GM12878 (cell line): ENCODE measurements at regions of chr13 and their contacts with region 1.

Region 1: GRCh38 chr13:108155185-108156106 is 59.9 kb downstream of the LIG4 start:
- DNase-seq: no peak
- ATAC-seq: peak; percentile 54
- H3K4me3 ChIP-seq: no peak overlapping the region
- H3K27ac ChIP-seq: no peak overlapping the region
- H3K4me1 ChIP-seq: no peaks in the 10 kb centered on the region
- H3K27me3 ChIP-seq: no peaks in the 10 kb centered on the region
- CTCF ChIP-seq: peak; percentile 71 to 76 (median 73)
- EP300 ChIP-seq: no peak
- POLR2A ChIP-seq: no peak
- RAD21 ChIP-seq: peak; percentile 71

Region 2: DNA sequence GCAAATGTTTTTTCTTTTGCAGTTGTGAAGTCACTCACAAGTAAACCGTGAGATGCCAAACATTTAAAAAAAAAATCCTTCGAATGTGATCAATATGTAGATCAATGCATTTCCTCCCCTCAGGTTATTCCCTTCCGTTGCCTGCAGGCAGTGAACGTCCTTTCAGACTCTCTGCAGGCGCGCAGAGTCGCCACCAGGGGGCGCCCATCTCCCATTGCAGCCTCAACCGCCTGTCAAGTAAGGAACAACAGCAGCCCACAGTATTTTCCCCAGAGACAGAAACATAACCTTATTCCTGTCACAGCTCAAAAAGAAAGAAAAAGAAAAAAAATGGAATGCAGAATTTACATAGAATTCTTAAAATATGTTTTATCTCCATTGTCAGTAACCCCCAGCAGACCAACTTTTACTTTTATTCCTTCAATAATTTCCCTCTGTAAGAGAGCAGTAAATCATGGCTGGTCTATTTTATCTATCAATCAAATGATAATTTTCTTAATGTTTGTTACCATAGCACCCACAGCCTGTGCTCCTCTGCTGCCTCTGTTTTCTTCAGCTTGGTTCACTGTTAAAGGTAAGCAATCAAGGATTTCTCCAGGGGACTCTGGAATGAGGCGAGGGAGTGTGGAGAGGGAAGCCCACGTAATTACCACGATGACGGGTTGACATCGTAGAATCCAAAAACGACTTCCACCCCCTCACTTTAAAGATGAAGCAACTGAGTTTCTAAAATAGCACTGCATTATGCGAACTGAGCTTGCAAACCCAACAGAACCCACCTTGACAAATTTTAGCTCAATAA is 949.9 kb before region 1 on chr13:
- CTCF ChIA-PET with region 1: interaction called, 6 read pairs
- POLR2A ChIA-PET with region 1: no interaction called
- RAD21 ChIA-PET with region 1: interaction called, 4 read pairs
- SMC1A ChIA-PET with region 1: no interaction called
- in situ Hi-C with region 1: loop called (anchors 5 kb)
- intact Hi-C with region 1: loop called (anchors 1 kb)
- DNase-seq: no peak
- ATAC-seq: peak; percentile 99
- H3K4me3 ChIP-seq: no peak overlapping the region
- H3K27ac ChIP-seq: no peak overlapping the region
- H3K4me1 ChIP-seq: no peaks in the 10 kb centered on the region
- H3K27me3 ChIP-seq: no peaks in the 10 kb centered on the region
- CTCF ChIP-seq: peak; percentile 87 to 97 (median 95); a peak in 5 of 6 replicates
- EP300 ChIP-seq: no peak
- POLR2A ChIP-seq: no peak
- RAD21 ChIP-seq: peak; percentile 60

Region 3: DNA sequence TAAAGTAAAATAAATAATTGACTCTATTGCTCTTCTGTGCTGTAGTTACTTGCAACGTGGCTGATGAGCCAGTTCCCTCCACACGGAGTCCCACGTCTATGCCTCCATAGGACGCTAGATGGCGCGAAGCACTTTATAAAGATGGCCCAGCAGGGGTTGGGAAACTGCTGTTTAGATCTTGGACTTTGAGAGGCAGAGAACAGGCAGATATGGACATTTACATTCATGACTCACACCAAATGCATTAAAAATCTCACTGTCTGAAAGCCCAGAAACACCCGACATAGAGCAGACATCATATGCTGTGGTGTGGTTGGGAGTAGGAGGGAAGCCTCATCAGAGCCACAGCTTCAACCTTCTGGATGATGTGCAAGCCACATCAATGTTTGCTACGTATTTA is 944.4 kb before region 1 on chr13:
- CTCF ChIA-PET with region 1: interaction called, 13 read pairs
- POLR2A ChIA-PET with region 1: no interaction called
- RAD21 ChIA-PET with region 1: interaction called, 4 read pairs
- SMC1A ChIA-PET with region 1: interaction called, 4 read pairs
- in situ Hi-C with region 1: loop called (anchors 5 kb)
- intact Hi-C with region 1: loop called (anchors 1 kb)
- DNase-seq: no peak
- ATAC-seq: peak; percentile 99
- H3K4me3 ChIP-seq: no peak overlapping the region
- H3K27ac ChIP-seq: no peak overlapping the region
- H3K4me1 ChIP-seq: no peaks in the 10 kb centered on the region
- H3K27me3 ChIP-seq: no peaks in the 10 kb centered on the region
- CTCF ChIP-seq: peak; percentile 82 to 92 (median 88)
- EP300 ChIP-seq: no peak
- POLR2A ChIP-seq: no peak
- RAD21 ChIP-seq: peak; percentile 88

Region 4: GRCh38 chr13:108137176-108137575 is 18.3 kb before region 1 on chr13:
- CTCF ChIA-PET with region 1: interaction called, 18 read pairs
- POLR2A ChIA-PET with region 1: no interaction called
- RAD21 ChIA-PET with region 1: no interaction called
- SMC1A ChIA-PET with region 1: interaction called, 4 read pairs
- in situ Hi-C with region 1: no loop called
- intact Hi-C with region 1: no loop called
- DNase-seq: no peak
- ATAC-seq: no peak
- H3K4me3 ChIP-seq: no peak overlapping the region
- H3K27ac ChIP-seq: no peak overlapping the region
- H3K4me1 ChIP-seq: no peaks in the 10 kb centered on the region
- H3K27me3 ChIP-seq: no peaks in the 10 kb centered on the region
- CTCF ChIP-seq: no peak
- EP300 ChIP-seq: no peak
- POLR2A ChIP-seq: no peak
- RAD21 ChIP-seq: no peak

Region 5: DNA sequence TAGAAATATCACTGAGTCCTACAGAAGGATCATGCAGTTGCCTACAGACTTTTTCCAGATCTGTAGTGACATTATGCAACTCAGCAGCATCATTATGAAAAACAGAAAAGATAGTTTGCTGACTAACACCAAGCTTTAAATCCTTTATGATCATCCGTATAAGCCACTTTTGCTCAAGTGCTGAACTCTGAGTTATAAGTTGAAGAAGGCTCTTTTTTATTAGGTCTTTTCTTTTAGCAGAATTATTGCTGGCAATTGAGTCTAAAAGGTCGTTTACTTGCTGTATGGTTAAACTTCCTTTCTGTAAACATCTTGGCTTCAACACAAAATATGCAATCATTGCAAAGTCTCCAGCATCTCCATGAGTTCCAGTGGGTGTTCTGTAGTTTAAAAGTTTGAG is 55.1 kb after region 1 on chr13:
- CTCF ChIA-PET with region 1: no interaction called
- POLR2A ChIA-PET with region 1: no interaction called
- RAD21 ChIA-PET with region 1: no interaction called
- SMC1A ChIA-PET with region 1: no interaction called
- in situ Hi-C with region 1: no loop called
- intact Hi-C with region 1: no loop called
- DNase-seq: no peak
- ATAC-seq: no peak
- H3K4me3 ChIP-seq: no peak overlapping the region
- H3K27ac ChIP-seq: no peak overlapping the region
- H3K4me1 ChIP-seq: peaks cover 6% of the 10 kb centered on the region; the same call in 1 of the 2 replicates
- H3K27me3 ChIP-seq: no peaks in the 10 kb centered on the region
- CTCF ChIP-seq: no peak
- EP300 ChIP-seq: no peak
- POLR2A ChIP-seq: no peak
- RAD21 ChIP-seq: no peak

Region 6: DNA sequence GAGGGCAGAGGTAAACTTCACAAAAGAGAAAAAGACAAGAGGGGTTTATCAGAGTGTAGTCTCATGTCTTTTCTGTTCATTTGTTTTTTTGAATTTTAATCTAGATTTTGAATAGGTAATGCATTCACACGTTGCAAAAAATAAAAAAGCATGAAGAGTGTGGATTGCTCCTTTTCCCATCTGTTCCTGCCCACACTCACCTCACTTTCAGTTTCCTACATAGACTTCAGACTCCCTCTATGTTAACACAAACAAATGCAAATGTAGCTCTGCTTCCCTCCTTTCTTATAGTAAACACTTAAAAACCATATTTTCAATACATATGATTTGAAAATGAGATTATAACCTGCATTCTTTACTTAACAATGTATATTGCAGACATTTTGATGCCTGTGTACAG is 134.4 kb after region 1 on chr13:
- CTCF ChIA-PET with region 1: no interaction called
- POLR2A ChIA-PET with region 1: no interaction called
- RAD21 ChIA-PET with region 1: no interaction called
- SMC1A ChIA-PET with region 1: no interaction called
- in situ Hi-C with region 1: no loop called
- intact Hi-C with region 1: no loop called
- DNase-seq: no peak
- ATAC-seq: no peak
- H3K4me3 ChIP-seq: no peak overlapping the region
- H3K27ac ChIP-seq: no peak overlapping the region
- H3K4me1 ChIP-seq: no peaks in the 10 kb centered on the region
- H3K27me3 ChIP-seq: no peaks in the 10 kb centered on the region
- CTCF ChIP-seq: no peak
- EP300 ChIP-seq: no peak
- POLR2A ChIP-seq: no peak
- RAD21 ChIP-seq: no peak